ENCODE measurements at regions of chr2 and their contacts with region 1.

Region 1: DNA sequence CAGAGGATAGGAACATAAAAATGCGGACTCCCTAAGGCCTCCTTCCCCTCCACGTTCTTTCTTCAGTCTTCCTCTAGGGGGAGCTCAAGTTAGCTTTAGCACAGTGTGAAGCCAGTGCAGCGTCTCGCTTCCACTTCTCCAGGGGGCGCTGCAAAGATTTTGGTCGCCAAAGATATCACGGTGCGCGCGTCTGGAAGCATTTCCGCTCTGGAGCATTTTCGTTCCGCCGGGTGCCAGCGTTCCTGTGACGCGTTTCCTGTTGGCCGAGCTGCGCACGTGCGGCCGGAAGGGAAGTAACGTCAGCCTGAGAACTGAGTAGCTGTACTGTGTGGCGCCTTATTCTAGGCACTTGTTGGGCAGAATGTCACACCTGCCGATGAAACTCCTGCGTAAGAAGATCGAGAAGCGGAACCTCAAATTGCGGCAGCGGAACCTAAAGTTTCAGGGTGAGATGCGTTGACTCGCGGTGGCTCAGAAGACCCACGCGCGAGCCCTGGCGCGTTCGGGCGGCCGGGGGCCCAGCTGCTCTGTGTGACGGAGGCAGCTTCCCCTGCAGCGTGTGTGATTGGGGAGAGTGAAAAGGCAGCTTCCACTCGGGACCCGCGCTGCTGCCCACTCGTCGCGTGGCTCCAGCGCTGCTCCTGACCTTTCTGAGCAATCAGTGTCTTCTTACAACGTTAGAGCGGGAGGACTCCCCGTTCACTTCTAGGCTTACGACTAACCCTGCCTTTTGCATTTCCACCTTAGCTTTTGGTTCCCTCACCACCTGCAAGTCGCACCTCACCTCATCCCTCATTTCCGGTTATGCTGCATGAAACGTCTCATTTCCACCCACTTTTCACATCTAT is at the start of gene DDX18:
- DNase-seq: peak; percentile 92
- ATAC-seq: peak; percentile 88
- H3K4me3 Mint-ChIP-seq: peak within 1 kb of the TSS; percentile 97
- H3K27ac Mint-ChIP-seq: peak within 1 kb of the TSS; percentile 99
- H3K4me1 Mint-ChIP-seq: peaks cover 51% of the 10 kb centered on the region
- H3K27me3 Mint-ChIP-seq: no peaks in the 10 kb centered on the region
- CTCF ChIP-seq: peak; percentile 82
- total RNA-seq, gene DDX18: 98.9 and 109 TPM in 2 replicates

Region 2: DNA sequence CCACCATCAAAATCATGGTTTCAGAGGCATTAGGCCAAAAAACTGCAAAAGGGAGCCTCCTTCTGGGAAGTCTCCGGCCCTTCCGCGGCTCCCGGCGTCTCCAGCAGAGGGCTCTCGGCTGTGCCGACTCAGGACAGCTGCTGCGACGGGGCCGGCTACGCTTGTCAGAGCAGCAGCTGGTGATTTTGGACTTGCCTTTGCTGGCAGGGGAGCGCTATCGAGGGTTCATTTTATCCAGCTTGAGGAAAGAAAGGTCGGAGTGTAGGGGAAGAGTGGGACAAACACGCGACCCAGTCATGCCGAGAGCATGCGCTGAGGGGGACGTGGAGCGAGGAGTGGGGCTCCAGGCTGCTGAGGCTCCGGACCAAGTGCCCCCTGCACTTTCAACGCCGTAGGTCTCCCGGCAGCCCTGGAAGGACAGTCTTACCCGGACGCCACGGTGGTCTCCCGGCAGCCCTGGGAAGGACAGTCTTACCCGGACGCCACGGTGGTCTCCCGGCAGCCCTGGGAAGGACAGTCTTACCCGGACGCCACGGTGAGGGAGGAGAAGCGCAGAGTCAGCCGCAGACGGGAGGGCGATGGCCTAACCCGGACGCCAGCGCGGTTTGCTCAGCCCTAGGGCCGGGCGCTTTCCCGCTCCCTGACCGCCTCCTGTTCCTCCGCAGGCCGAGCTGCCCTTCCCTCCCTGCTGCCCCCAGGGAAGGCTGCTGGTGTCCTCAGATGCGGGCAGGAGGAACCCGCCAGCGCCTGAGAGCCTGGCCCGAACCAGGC is 21.5 kb after region 1 on chr2:
- CTCF ChIA-PET with region 1: interaction called, 3 read pairs
- POLR2A ChIA-PET with region 1: interaction called, 9 read pairs
- intact Hi-C with region 1: loop called (anchors 2 kb)
- DNase-seq: peak; percentile 51
- ATAC-seq: peak; percentile 89
- H3K4me3 Mint-ChIP-seq: peak overlapping the region; percentile 86
- H3K27ac Mint-ChIP-seq: no peak overlapping the region
- H3K4me1 Mint-ChIP-seq: peaks cover 10% of the 10 kb centered on the region
- H3K27me3 Mint-ChIP-seq: peaks cover 11% of the 10 kb centered on the region
- CTCF ChIP-seq: no peak

Region 3: DNA sequence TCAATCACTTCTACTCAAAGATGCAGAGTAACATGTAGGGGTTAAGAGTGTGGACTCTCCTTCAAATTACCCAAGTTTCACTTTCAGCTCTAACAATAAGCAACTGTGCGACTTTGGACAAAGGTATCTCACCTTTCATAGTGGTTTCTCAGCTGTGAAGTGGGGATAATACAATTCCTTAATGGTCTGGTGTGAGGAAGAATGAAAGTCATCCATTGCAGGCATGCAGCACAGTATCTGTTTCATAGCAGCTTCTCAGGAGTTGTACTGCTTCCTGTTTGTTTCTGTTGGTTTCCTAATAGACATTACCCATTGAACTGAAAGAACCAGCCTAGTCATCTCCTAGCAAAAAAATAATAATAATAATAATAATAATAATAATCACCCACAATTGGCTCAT is 74.3 kb after region 1 on chr2:
- CTCF ChIA-PET with region 1: no interaction called
- POLR2A ChIA-PET with region 1: no interaction called
- intact Hi-C with region 1: no loop called
- DNase-seq: no peak
- ATAC-seq: no peak
- H3K4me3 Mint-ChIP-seq: no peak overlapping the region
- H3K27ac Mint-ChIP-seq: no peak overlapping the region
- H3K4me1 Mint-ChIP-seq: no peaks in the 10 kb centered on the region
- H3K27me3 Mint-ChIP-seq: peaks cover 1% of the 10 kb centered on the region
- CTCF ChIP-seq: no peak

Region 4: GRCh38 chr2:118003396-118003824 is 188.8 kb after region 1 on chr2:
- CTCF ChIA-PET with region 1: interaction called, 36 read pairs
- POLR2A ChIA-PET with region 1: interaction called, 11 read pairs
- intact Hi-C with region 1: loop called (anchors 1 kb)
- DNase-seq: peak; percentile 17
- ATAC-seq: peak; percentile 96
- H3K4me3 Mint-ChIP-seq: no peak overlapping the region
- H3K27ac Mint-ChIP-seq: no peak overlapping the region
- H3K4me1 Mint-ChIP-seq: peaks cover 4% of the 10 kb centered on the region
- H3K27me3 Mint-ChIP-seq: no peaks in the 10 kb centered on the region
- CTCF ChIP-seq: peak; percentile 60

Region 5: GRCh38 chr2:118056165-118056534 is 241.5 kb after region 1 on chr2:
- CTCF ChIA-PET with region 1: interaction called, 3 read pairs
- POLR2A ChIA-PET with region 1: no interaction called
- intact Hi-C with region 1: loop called (anchors 1 kb)
- DNase-seq: peak; percentile 34
- ATAC-seq: peak; percentile 89
- H3K4me3 Mint-ChIP-seq: peak overlapping the region; percentile 66
- H3K27ac Mint-ChIP-seq: peak overlapping the region; percentile 90
- H3K4me1 Mint-ChIP-seq: peaks cover 63% of the 10 kb centered on the region
- H3K27me3 Mint-ChIP-seq: no peaks in the 10 kb centered on the region
- CTCF ChIP-seq: no peak

Region 6: GRCh38 chr2:118186110-118186857 is 371.6 kb after region 1 on chr2:
- CTCF ChIA-PET with region 1: no interaction called
- POLR2A ChIA-PET with region 1: interaction called, 8 read pairs
- intact Hi-C with region 1: loop called (anchors 1 kb)
- DNase-seq: peak; percentile 81
- ATAC-seq: peak; percentile 95
- H3K4me3 Mint-ChIP-seq: peak overlapping the region; percentile 97
- H3K27ac Mint-ChIP-seq: peak overlapping the region; percentile 98
- H3K4me1 Mint-ChIP-seq: peaks cover 16% of the 10 kb centered on the region
- H3K27me3 Mint-ChIP-seq: peaks cover under 1% of the 10 kb centered on the region
- CTCF ChIP-seq: no peak

Region 7: DNA sequence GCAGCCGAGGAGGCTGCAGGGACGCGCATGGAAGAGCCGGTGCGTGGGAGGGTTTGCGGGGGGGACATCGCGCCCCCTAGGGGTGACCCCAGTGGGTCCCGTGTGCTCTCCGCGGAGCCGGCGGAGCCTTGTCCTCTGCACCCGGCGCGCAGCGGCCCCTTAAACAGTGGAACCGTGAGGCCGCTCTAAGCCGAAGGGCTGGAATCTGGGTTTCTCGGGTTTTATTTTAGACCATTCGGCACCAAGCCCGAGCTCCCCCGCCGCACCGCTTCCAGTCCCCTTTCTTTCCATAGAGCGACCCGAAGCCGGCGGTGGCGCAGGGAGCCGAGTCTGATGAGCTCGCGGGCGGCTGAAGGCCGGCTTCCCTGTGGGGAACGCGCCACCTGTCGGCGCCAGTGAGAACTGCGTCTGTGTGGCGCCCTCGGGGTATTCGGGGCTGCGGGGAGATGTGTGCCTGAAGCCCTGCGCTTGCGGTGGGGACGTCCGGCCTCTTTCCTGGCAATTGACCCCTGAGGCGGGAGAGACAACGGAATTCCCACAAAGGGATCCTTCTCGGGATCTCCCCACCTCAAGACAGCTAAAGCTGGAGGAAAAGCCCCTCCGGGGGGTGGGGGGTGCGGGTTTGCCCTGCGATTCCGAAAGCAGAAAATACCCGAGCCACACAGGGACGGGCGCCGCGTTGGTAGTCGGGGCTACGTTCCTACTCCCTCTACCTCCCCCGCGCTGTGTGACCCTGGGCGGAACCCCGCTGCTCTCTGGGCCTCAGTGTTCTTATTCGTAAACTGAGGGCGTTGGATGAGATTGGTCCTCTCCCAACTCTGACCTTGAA is 1041.0 kb after region 1 on chr2:
- CTCF ChIA-PET with region 1: no interaction called
- POLR2A ChIA-PET with region 1: no interaction called
- intact Hi-C with region 1: loop called (anchors 10 kb)
- DNase-seq: peak; percentile 77
- ATAC-seq: peak; percentile 90
- H3K4me3 Mint-ChIP-seq: peak overlapping the region; percentile 61
- H3K27ac Mint-ChIP-seq: peak overlapping the region; percentile 30
- H3K4me1 Mint-ChIP-seq: peaks cover 23% of the 10 kb centered on the region
- H3K27me3 Mint-ChIP-seq: peaks cover 65% of the 10 kb centered on the region
- CTCF ChIP-seq: peak; percentile 90